ENCODE measurements at regions of chr1 and their contacts with region 1.

Region 1: DNA sequence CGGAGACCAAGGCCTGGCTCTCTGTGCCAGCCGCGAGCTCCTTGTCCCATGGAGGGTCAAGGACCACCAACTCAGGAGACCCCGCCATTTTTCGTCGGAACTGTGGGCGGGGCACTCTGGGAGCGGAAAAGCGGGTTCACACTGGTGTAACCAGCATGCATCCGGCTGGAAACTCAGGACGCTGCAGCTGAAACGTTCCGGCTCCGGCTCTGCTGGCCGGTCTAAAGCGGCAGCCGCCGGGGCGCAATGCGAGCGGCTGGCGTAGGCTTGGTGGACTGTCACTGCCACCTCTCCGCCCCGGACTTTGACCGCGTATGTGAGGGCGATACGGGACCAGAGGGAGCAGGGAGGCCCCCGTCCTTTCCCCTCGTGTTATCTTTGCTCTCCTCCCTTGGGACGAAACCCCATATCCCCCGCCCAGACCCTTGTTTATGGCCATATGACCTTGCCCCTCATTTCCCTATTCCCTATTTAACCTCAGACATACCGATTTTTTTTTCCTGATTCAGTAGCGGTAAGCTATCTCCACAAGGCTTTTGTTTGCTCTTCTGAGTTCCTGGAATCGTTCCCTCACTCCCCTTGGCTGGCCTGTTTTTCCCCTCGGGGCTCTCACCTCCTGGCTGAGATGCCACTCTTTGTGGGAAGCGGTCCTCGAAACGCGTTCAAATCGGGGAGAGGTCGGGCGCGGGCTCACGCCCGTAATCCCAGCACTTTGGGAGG is at the starts of genes NSL1 and TATDN3:
- DNase-seq: peak; percentile 98
- ATAC-seq: peak; percentile 73
- H3K4me3 Mint-ChIP-seq: peak within 1 kb of the TSS; percentile 99
- H3K27ac Mint-ChIP-seq: peak within 1 kb of the TSS; percentile 98
- H3K4me1 Mint-ChIP-seq: peaks cover 60% of the 10 kb centered on the region
- H3K27me3 Mint-ChIP-seq: no peaks in the 10 kb centered on the region
- CTCF ChIP-seq: no peak
- total RNA-seq, gene NSL1: 34.4 and 44.5 TPM in 2 replicates
- total RNA-seq, gene TATDN3: 30.3 and 31.4 TPM in 2 replicates

Region 2: GRCh38 chr1:212558693-212559480 is 232.9 kb before region 1 on chr1:
- CTCF ChIA-PET with region 1: no interaction called
- POLR2A ChIA-PET with region 1: interaction called, 9 read pairs
- intact Hi-C with region 1: loop called (anchors 2 kb)
- DNase-seq: peak; percentile 93
- ATAC-seq: peak; percentile 88
- H3K4me3 Mint-ChIP-seq: peak overlapping the region; percentile 88
- H3K27ac Mint-ChIP-seq: peak overlapping the region; percentile 93
- H3K4me1 Mint-ChIP-seq: peaks cover 13% of the 10 kb centered on the region
- H3K27me3 Mint-ChIP-seq: peaks cover 2% of the 10 kb centered on the region
- CTCF ChIP-seq: no peak

Region 3: DNA sequence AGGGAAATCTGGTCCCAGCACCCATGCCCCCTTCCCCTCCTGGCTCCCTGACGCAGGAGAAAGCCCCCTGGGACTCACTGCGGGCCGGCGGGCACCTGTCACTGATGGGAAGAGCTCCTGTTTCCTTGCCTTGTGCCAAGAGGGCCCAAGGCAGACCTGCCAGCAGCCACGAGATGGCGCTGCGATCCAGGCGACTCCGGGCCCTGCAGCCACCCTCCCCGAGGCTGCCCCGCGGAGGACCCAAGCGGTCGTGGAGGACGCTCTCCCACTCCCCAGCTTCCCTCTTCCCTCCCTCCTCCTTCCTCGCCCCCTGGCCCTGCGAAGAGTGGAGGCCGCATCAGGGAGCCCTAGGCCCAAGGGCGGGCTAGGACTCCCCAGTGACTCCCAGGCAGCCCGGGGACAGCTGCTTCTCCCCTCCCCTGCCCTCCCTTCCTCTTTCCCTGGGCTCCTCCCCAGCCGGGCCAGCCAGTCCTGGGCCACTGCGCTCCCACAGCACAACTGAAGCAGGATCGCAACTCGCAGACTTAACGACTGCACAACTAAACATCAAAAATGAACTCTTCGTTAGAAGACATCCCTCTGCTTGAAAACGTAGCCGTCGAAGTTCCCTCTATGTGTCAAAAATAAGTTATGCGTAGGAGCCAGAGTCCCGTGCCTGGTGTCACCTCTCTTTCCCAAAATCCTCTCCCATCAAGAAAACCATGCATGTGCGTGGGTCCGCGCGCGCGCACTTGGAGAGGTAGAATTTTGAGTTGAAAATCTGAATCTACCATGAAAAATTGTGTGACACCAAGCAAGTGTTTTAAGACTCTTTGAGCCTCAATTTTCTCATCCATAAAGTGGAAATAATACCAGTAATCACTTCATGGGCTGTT is 126.4 kb before region 1 on chr1:
- CTCF ChIA-PET with region 1: interaction called, 21 read pairs
- POLR2A ChIA-PET with region 1: interaction called, 8 read pairs
- intact Hi-C with region 1: no loop called
- DNase-seq: peak; percentile 80
- ATAC-seq: peak; percentile 94
- H3K4me3 Mint-ChIP-seq: peak overlapping the region; percentile 82
- H3K27ac Mint-ChIP-seq: peak overlapping the region; percentile 53
- H3K4me1 Mint-ChIP-seq: peaks cover 17% of the 10 kb centered on the region
- H3K27me3 Mint-ChIP-seq: no peaks in the 10 kb centered on the region
- CTCF ChIP-seq: peak; percentile 61

Region 4: DNA sequence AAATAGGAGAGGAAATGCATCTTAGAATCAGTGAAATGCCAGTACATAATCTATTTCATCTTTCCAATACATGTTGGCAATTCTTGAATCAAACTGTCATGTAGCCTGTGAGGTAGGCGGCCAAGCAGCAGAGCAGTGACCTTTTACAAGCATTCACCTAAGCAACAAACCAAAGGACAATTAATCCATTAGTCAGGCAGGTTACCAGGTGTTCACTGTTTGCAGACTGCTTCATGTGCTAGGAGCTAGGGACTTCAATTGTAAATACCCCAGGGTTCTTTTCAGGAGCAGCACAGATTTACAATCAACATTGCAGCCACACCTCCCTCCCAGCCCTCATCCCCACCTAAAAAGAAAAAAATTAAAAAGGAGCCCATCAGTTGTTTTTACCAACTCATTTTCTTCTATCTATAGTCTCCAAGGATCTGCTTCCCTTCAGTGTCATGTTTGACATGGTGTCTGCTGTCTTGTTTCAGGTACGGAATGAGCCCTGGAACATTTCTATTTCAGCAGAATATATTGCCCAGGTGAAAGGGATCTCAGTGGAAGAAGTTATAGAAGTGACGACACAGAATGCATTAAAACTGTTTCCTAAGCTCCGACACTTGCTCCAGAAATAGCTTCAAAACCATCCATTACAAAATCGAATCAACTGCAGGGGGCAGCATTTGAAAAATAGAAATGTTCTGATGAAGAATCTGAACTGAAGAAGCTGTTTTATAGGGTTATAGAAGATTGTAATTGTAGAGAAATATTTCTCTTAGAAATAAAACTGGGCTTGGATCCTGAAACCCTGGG is 22.9 kb after region 1 on chr1:
- CTCF ChIA-PET with region 1: no interaction called
- POLR2A ChIA-PET with region 1: interaction called, 15 read pairs
- intact Hi-C with region 1: no loop called
- DNase-seq: no peak
- ATAC-seq: no peak
- H3K4me3 Mint-ChIP-seq: no peak overlapping the region
- H3K27ac Mint-ChIP-seq: no peak overlapping the region
- H3K4me1 Mint-ChIP-seq: peaks cover 6% of the 10 kb centered on the region
- H3K27me3 Mint-ChIP-seq: no peaks in the 10 kb centered on the region
- CTCF ChIP-seq: no peak

Region 5: GRCh38 chr1:212857992-212858460 is 66.2 kb after region 1 on chr1 and contains the start of gene FLVCR1:
- CTCF ChIA-PET with region 1: no interaction called
- POLR2A ChIA-PET with region 1: interaction called, 45 read pairs
- intact Hi-C with region 1: loop called (anchors 1 kb)
- DNase-seq: peak; percentile 90
- ATAC-seq: peak; percentile 99
- H3K4me3 Mint-ChIP-seq: peak within 1 kb of the TSS; percentile 99
- H3K27ac Mint-ChIP-seq: peak within 1 kb of the TSS; percentile 93
- H3K4me1 Mint-ChIP-seq: peaks cover 22% of the 10 kb centered on the region
- H3K27me3 Mint-ChIP-seq: no peaks in the 10 kb centered on the region
- CTCF ChIP-seq: no peak
- total RNA-seq, gene FLVCR1: 12.7 and 16.4 TPM in 2 replicates

Region 6: DNA sequence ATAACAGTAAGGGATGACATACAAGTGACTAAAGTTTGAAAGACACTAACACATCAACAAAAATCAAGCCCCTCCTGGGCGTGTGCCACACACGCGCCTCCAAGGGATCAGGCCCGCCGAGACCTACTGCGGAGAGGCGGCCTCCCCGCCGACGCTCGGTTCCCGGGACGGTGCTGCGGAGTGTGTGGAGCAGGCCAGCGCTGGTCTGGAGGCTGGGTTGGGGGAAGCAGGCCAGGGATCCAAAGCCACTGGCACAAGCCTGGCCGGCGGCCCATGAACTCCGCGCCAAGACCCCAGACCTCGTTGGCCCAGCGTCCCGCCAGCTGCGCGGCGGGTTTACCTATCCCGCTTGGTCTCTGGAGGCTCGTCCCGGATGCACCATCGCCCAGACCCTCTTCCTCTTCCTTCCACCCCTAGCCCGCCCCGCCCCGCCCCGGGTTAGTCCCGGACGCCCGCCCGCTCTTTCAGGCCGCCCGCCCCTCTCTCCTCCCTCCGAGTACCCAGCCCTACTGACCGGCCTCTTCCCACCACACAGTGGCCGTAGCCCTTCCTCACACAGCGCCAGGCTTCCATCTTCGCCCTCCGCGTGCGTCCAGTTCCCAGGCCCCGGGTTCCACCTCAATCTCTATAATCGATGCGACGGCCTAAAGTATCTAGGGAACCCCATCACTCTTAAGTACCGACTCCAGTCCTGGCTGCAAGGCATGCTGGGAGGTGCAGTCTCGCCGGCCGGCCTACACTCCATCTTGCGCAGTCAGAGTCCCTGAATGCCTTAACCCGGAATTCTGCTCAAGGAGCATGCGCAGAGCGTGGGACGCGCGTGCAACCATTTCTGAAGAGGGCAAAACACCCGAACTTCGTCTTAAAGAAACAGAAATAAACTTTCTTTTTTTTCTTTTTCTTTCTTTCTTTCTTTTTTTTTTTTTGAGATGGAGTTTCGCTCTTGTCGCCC is 223.5 kb after region 1 on chr1 and contains the start of gene ANGEL2:
- CTCF ChIA-PET with region 1: no interaction called
- POLR2A ChIA-PET with region 1: interaction called, 6 read pairs
- intact Hi-C with region 1: loop called (anchors 1 kb)
- DNase-seq: peak; percentile 87
- ATAC-seq: peak; percentile 95
- H3K4me3 Mint-ChIP-seq: peak within 1 kb of the TSS; percentile 100
- H3K27ac Mint-ChIP-seq: peak within 1 kb of the TSS; percentile 99
- H3K4me1 Mint-ChIP-seq: peaks cover 20% of the 10 kb centered on the region
- H3K27me3 Mint-ChIP-seq: no peaks in the 10 kb centered on the region
- CTCF ChIP-seq: no peak
- total RNA-seq, gene ANGEL2: 54.1 and 63.3 TPM in 2 replicates